MCF 10A (cell line): ENCODE measurements at regions of chr17 and their contacts with region 1.

Region 1: DNA sequence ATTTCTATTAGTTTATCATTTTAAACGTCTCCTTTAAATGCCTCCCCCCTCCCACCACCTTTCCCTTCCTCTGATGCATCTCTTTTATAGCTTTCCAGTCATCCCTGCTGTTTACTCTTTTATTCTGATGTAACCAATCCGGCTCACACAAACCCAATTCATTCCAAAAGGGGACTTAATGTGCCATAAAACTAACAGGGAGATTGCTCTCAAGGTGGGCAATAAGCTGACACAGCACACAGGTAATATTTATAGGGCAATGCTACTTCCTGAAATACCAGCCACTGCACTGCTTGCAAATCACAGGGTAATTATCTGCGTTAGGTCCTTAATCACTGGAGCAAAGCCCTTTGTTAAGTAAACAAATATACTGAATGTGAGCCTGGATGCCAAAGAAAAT is 23.3 kb upstream of the CA10 start:
- DNase-seq: no peak
- H3K4me3 Mint-ChIP-seq: no peak overlapping the region
- H3K27ac Mint-ChIP-seq: no peak overlapping the region
- H3K4me1 Mint-ChIP-seq: no peaks in the 10 kb centered on the region
- H3K27me3 Mint-ChIP-seq: peaks cover 33% of the 10 kb centered on the region
- CTCF ChIP-seq: no peak

Region 2: GRCh38 chr17:52064791-52065211 is 117.0 kb before region 1 on chr17:
- CTCF ChIA-PET with region 1: no interaction called
- POLR2A ChIA-PET with region 1: no interaction called
- intact Hi-C with region 1: no loop called
- DNase-seq: no peak
- H3K4me3 Mint-ChIP-seq: no peak overlapping the region
- H3K27ac Mint-ChIP-seq: no peak overlapping the region
- H3K4me1 Mint-ChIP-seq: no peaks in the 10 kb centered on the region
- H3K27me3 Mint-ChIP-seq: peaks cover 16% of the 10 kb centered on the region
- CTCF ChIP-seq: no peak

Region 3: DNA sequence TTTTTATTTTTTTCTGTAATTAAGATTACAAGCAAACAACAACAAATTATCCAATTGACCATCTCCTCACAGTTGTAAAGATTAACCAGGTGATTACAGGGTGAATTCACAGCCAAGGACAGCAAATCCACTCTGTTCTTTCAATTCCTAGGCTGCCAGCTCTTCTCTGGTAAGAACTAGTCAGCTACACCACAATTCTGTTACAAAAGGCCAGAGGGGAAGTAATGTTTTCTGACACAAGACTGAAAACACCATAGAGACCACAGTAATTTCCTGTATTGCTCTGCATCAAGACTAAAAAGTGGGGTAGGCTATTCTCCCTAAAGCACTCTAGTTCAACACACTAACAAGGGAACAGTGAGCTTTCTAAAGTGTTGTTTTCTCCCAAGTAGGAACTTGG is 33.9 kb before region 1 on chr17:
- CTCF ChIA-PET with region 1: no interaction called
- POLR2A ChIA-PET with region 1: no interaction called
- intact Hi-C with region 1: no loop called
- DNase-seq: peak; percentile 49
- H3K4me3 Mint-ChIP-seq: no peak overlapping the region
- H3K27ac Mint-ChIP-seq: peak overlapping the region; percentile 73
- H3K4me1 Mint-ChIP-seq: peaks cover 45% of the 10 kb centered on the region
- H3K27me3 Mint-ChIP-seq: no peaks in the 10 kb centered on the region
- CTCF ChIP-seq: no peak

Region 4: DNA sequence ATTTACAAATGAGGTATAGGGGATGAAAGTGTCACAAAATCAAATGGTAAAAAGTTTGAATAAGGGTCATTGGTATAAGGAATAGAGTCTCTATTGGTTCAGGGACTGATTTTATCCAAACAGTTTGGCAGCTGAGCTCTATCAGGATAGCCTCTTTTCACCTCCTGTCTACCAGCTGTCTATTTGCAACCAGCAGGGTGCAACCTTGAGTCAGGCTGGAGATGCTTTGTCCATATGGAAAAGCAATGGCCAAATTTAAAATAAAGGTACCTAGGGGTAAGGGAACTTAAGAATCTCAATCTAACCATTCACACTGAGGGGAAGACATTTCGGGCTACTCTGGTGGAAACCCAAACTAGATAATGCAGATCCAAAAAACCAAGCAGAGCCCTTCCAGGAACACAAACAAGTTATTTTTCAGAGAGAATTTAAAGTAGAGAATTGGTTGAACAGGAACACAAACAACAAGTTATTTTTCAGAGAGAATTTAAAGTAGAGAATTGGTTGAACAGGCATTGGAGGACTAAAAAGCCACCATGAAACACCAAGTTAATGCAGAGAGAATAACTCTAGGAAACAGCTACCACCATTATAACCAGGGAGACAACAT is 10.7 kb before region 1 on chr17:
- CTCF ChIA-PET with region 1: interaction called, 10 read pairs
- POLR2A ChIA-PET with region 1: no interaction called
- intact Hi-C with region 1: no loop called
- DNase-seq: peak; percentile 66
- H3K4me3 Mint-ChIP-seq: no peak overlapping the region
- H3K27ac Mint-ChIP-seq: no peak overlapping the region
- H3K4me1 Mint-ChIP-seq: no peaks in the 10 kb centered on the region
- H3K27me3 Mint-ChIP-seq: peaks cover 54% of the 10 kb centered on the region
- CTCF ChIP-seq: peak; percentile 63